ENCODE measurements at regions of chr11 and their contacts with region 1.

Region 1: DNA sequence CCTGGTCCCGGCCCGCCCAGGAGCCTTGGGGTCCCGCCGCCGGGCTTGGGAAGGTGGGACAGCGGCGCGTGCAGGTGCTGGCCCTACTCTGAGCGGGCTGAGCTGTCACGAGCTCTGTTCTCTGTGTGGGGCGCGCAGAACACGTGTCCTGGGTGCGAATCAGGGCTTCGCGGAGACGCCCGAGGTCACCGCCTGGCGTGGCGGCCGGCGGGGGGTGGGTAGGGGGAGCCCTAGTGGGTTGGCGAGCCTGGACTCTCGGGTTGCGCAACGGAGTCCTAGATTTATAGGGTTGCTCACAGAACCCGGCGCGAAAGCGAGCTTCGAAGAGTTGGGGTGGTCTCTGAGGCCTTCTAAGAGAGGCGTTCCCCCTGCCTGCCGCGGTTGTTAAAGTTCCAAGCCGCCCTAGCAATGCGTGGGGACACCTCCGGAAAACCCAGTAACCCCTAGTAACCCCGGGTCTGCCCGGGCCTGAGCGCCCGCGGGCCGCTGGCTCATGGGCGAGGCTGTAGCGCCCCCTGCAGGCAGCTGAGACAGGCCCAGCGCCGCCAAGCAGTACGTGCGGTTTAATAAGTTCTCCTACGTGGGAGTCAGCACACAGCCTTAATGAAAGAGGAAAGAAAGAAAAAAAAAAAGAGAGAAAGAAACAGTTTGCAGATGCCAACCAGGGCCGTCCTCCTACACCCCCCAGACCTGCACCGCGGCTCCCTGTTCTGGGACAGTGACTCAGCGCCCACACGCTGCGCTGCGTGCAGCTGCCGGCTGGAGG is 2.8 kb downstream of the ADM start:
- DNase-seq: peak; percentile 70
- H3K4me3 Mint-ChIP-seq: peak overlapping the region; percentile 69
- H3K27ac Mint-ChIP-seq: peak overlapping the region; percentile 69
- H3K4me1 Mint-ChIP-seq: peaks cover 50% of the 10 kb centered on the region
- H3K27me3 Mint-ChIP-seq: peaks cover 61% of the 10 kb centered on the region

Region 2: DNA sequence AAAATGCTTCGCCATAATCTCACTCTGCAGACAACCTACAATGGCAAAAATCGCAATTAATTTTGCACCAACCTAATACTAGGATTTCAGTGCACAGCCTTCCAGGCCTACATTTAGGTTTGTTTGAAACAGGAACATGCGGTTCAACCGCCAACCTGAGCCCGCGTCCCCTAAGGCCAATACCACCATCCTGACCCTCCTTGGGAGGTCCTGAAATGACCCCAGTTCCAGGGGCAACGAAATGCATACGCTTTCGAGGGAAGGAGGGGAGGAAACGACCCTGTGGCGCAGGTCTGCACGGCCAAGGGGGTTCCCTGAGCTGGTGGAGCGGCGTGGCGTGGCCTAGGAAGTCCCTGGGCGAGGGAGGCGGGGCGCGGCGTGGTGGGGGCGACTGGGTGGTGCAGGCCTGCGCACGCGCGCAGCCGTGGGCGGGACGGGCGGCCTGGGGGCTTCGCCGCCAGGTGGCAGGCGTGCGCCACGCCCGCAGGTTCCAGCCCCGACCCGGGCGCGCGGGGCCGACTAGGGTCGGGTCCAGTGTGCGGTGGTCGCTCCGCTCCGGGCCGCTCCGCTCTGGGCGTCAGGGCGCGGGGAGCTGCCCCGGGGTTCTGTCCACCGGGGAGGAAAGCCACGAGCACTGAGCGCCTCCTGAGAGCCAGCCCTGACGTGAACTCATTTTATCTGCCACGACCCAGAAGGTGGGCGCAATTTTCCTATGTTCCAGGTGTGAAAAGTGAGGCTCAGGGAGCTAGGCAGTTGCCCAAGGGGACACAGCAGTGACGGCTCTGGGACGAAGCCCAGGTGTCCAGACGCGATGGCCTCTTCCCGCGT is 549.6 kb before region 1 on chr11:
- intact Hi-C with region 1: loop called (anchors 1 kb)
- DNase-seq: peak; percentile 87
- H3K4me3 Mint-ChIP-seq: peak overlapping the region; percentile 73
- H3K27ac Mint-ChIP-seq: peak overlapping the region; percentile 89
- H3K4me1 Mint-ChIP-seq: peaks cover 40% of the 10 kb centered on the region
- H3K27me3 Mint-ChIP-seq: no peaks in the 10 kb centered on the region

Region 3: DNA sequence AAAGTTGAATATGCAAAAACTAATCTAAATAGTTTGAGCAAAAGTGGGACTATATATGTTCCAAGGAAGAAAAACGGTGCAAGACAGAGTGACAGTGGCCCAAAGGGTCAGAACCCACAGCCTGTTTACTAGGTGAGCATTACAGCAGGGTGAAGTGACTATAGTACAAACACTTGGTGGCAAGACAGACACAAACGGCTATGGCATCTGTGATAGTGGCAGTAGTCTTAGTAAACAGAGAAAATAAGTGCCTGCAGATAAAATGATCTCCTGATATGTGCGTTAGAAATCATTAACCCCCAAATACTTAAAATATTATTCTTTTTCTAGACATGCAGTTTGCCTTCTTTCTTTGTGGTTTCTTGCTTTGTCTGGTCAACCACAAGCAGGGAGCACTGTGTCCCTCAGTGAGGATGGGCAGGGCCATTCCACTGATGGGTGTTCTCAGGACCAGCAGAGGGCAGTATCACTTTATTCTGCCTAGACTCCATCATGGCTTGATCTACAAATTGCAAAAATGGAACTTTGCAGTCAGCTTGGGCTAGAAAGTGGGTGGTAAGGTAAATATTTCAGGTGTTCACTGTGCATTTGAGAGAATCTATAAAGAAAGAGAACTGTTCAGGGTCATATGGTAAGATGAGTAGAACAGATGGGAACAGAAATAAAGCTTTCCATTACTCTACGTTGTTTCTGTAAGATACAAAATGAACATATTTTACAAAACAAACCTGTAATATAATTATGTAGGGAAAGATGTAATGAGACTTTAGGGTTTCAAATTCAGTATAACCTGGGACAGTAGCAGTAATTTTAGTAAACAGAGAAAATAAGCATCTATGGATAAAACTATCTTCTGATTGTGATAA is 445.5 kb before region 1 on chr11:
- intact Hi-C with region 1: loop called (anchors 1 kb)
- DNase-seq: peak; percentile 20
- H3K4me3 Mint-ChIP-seq: no peak overlapping the region
- H3K27ac Mint-ChIP-seq: no peak overlapping the region
- H3K4me1 Mint-ChIP-seq: peaks cover 32% of the 10 kb centered on the region
- H3K27me3 Mint-ChIP-seq: peaks cover 4% of the 10 kb centered on the region

Region 4: GRCh38 chr11:10091314-10092045 is 216.1 kb before region 1 on chr11:
- intact Hi-C with region 1: loop called (anchors 10 kb)
- DNase-seq: no peak
- H3K4me3 Mint-ChIP-seq: no peak overlapping the region
- H3K27ac Mint-ChIP-seq: no peak overlapping the region
- H3K4me1 Mint-ChIP-seq: peaks cover 17% of the 10 kb centered on the region
- H3K27me3 Mint-ChIP-seq: peaks cover 7% of the 10 kb centered on the region

Region 5: GRCh38 chr11:10322830-10323792 is 15.5 kb after region 1 on chr11:
- intact Hi-C with region 1: loop called (anchors 1 kb)
- DNase-seq: peak; percentile 31
- H3K4me3 Mint-ChIP-seq: no peak overlapping the region
- H3K27ac Mint-ChIP-seq: peak overlapping the region; percentile 86
- H3K4me1 Mint-ChIP-seq: peaks cover 16% of the 10 kb centered on the region
- H3K27me3 Mint-ChIP-seq: peaks cover 27% of the 10 kb centered on the region